GM10248 (cell line): ENCODE measurements at regions of chr1 and their contacts with region 1.

Region 1: DNA sequence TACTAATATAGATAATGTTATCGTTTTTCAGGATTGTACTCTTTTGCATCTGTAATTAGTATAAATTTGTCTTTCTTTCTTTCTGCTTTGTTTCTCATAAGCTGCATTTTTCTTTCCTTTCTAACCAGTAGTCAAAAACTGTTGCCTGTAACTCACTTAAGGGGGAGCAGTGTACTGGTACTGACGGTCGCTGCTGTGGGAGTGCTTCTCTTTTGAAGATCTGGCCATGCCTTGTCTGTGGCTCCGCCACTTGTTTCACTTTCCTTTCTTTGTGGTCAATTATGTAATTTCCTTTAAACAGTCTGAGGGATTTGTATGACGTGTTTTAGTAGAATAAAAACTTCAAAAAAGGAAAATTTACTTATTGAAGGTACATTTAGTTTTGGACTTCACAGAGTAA is 37.0 kb downstream of the MIA3 start:
- DNase-seq: peak; percentile 69
- CTCF ChIP-seq: peak; percentile 41

Region 2: GRCh38 chr1:222643938-222644635 is 10.8 kb before region 1 on chr1:
- CTCF ChIA-PET with region 1: interaction called, 10 read pairs
- POLR2A ChIA-PET with region 1: no interaction called
- DNase-seq: peak; percentile 92
- CTCF ChIP-seq: no peak